CD4-positive, alpha-beta memory T cell (primary cell): ENCODE measurements at regions of chr9 and their contacts with region 1.

Region 1: DNA sequence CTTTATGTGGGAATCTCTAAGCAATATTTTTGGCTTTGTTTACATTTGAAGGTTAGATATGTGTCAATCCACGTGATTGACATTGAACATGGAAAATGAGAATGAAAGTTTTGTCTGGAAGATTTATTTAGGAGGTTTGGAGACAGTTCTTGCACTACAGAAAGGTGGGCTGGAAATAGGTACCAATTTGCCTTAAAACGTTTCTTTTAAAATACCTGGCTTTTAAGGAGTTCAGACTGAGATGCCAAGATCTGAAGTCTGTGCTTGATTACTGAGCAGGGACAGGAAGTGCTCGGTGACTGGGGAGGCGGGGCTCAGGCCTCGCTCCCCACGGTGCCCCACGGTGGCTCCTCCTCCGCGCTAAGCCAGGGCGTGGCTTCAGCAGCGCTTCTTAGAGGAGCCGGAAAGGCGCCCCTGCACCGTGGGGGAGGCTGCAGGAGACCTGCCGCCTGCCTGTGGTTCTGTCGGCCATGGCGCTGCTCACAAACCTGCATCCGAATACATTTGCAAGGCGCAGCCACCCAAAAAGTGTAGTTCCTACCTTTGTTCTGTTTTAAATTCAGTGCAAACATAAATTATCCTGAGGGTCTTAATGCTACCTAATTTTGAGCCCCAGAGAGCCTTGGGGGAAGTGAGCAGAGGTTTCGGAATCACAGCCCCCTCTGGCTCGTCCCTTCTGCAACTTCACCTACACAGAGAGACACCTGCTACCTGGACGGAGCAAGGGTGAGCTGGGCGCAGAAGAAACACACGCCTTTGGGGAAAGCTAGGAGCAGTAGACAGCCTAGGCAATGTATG is 49.2 kb downstream of the USP20 start:
- DNase-seq: peak; percentile 93 to 97 (median 95)
- H3K4me3 ChIP-seq: peak overlapping the region; percentile 78 to 80
- H3K4me3 Mint-ChIP-seq: peak overlapping the region; percentile 90 to 98 (median 94)
- H3K27ac ChIP-seq: peak overlapping the region; percentile 98
- H3K27ac Mint-ChIP-seq: peak overlapping the region; percentile 99 to 100 (median 100)
- H3K4me1 ChIP-seq: peaks cover 62% of the 10 kb centered on the region
- H3K4me1 Mint-ChIP-seq: peaks cover 26 to 60% (median 40%) of the 10 kb centered on the region in 4 donors
- H3K27me3 ChIP-seq: no peaks in the 10 kb centered on the region
- H3K27me3 Mint-ChIP-seq: no peaks in the 10 kb centered on the region

Region 2: GRCh38 chr9:129802851-129803675 is 81.4 kb before region 1 on chr9 and contains the start of gene TOR1B:
- CTCF ChIA-PET with region 1: interaction called, 3 read pairs
- POLR2A ChIA-PET with region 1: interaction called, 8 read pairs
- intact Hi-C with region 1: loop called (anchors 1 kb)
- DNase-seq: peak; percentile 93 to 96 (median 94)
- H3K4me3 ChIP-seq: peak within 1 kb of the TSS; percentile 77 to 78
- H3K4me3 Mint-ChIP-seq: peak within 1 kb of the TSS; percentile 91 to 96 (median 93)
- H3K27ac ChIP-seq: peak within 1 kb of the TSS; percentile 85
- H3K27ac Mint-ChIP-seq: peak within 1 kb of the TSS; percentile 88 to 97 (median 95)
- H3K4me1 ChIP-seq: peaks cover 27% of the 10 kb centered on the region
- H3K4me1 Mint-ChIP-seq: peaks cover 17 to 31% (median 23%) of the 10 kb centered on the region in 4 donors
- H3K27me3 ChIP-seq: no peaks in the 10 kb centered on the region
- H3K27me3 Mint-ChIP-seq: no peaks in the 10 kb centered on the region
- total RNA-seq, gene TOR1B: 29.5 to 33.0 TPM

Region 3: DNA sequence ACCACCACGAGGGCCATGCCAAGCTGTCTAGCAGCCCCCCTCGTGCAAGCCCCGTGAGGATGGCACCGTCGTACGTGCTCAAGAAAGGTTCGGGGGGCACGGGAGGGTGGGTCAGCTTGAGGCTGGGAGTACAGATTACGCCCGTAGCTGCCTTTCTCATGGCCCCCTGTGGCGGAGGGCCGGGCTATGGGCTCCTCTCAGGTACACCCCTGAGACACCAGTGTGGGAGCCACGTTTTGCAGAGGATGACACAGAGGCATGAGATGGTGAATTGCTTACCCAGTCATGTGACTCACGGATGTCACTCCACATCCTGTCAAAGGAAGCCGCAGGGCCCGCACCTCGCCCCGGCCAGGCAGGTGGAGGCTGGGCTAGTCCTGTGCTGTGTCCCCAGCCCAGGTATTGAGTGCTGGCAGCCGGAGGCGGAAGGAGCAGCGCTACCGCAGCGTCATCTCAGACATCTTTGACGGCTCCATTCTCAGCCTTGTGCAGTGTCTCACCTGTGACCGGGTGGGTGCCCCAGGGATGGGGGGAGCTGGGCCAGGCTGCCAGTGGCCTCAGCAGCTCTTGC is 15.4 kb before region 1 on chr9:
- CTCF ChIA-PET with region 1: interaction called, 34 read pairs
- POLR2A ChIA-PET with region 1: interaction called, 423 read pairs
- intact Hi-C with region 1: loop called (anchors 1 kb)
- DNase-seq: peak; percentile 94 to 98 (median 96)
- H3K4me3 ChIP-seq: peak overlapping the region; percentile 12 to 51
- H3K4me3 Mint-ChIP-seq: peak overlapping the region; percentile 59 to 78 (median 69)
- H3K27ac ChIP-seq: peak overlapping the region; percentile 90
- H3K27ac Mint-ChIP-seq: peak overlapping the region; percentile 86 to 98 (median 94)
- H3K4me1 ChIP-seq: peaks cover 89% of the 10 kb centered on the region
- H3K4me1 Mint-ChIP-seq: peaks cover 46 to 93% (median 73%) of the 10 kb centered on the region in 4 donors
- H3K27me3 ChIP-seq: no peaks in the 10 kb centered on the region
- H3K27me3 Mint-ChIP-seq: no peaks in the 10 kb centered on the region

Region 4: GRCh38 chr9:129932303-129933151 is 48.1 kb after region 1 on chr9:
- CTCF ChIA-PET with region 1: interaction called, 3 read pairs
- POLR2A ChIA-PET with region 1: interaction called, 83 read pairs
- intact Hi-C with region 1: loop called (anchors 5 kb)
- DNase-seq: peak in 1 of 5 donors; percentile 15
- H3K4me3 ChIP-seq: peak overlapping the region in 1 of 2 donors; percentile 3
- H3K4me3 Mint-ChIP-seq: peak overlapping the region; percentile 71 to 86 (median 75)
- H3K27ac ChIP-seq: peak overlapping the region; percentile 66
- H3K27ac Mint-ChIP-seq: peak overlapping the region; percentile 89 to 96 (median 91)
- H3K4me1 ChIP-seq: peaks cover 59% of the 10 kb centered on the region
- H3K4me1 Mint-ChIP-seq: peaks cover 38 to 73% (median 56%) of the 10 kb centered on the region in 4 donors
- H3K27me3 ChIP-seq: no peaks in the 10 kb centered on the region
- H3K27me3 Mint-ChIP-seq: no peaks in the 10 kb centered on the region

Region 5: GRCh38 chr9:129962889-129963703 is 78.7 kb after region 1 on chr9:
- CTCF ChIA-PET with region 1: interaction called, 31 read pairs
- POLR2A ChIA-PET with region 1: interaction called, 98 read pairs
- intact Hi-C with region 1: loop called (anchors 1 kb)
- DNase-seq: peak; percentile 85 to 94 (median 88)
- H3K4me3 ChIP-seq: peak overlapping the region; percentile 64 to 67
- H3K4me3 Mint-ChIP-seq: peak overlapping the region; percentile 75 to 92 (median 87)
- H3K27ac ChIP-seq: peak overlapping the region; percentile 90
- H3K27ac Mint-ChIP-seq: peak overlapping the region; percentile 95 to 99 (median 98)
- H3K4me1 ChIP-seq: peaks cover 55% of the 10 kb centered on the region
- H3K4me1 Mint-ChIP-seq: peaks cover 45 to 82% (median 66%) of the 10 kb centered on the region in 4 donors
- H3K27me3 ChIP-seq: no peaks in the 10 kb centered on the region
- H3K27me3 Mint-ChIP-seq: no peaks in the 10 kb centered on the region

Region 6: DNA sequence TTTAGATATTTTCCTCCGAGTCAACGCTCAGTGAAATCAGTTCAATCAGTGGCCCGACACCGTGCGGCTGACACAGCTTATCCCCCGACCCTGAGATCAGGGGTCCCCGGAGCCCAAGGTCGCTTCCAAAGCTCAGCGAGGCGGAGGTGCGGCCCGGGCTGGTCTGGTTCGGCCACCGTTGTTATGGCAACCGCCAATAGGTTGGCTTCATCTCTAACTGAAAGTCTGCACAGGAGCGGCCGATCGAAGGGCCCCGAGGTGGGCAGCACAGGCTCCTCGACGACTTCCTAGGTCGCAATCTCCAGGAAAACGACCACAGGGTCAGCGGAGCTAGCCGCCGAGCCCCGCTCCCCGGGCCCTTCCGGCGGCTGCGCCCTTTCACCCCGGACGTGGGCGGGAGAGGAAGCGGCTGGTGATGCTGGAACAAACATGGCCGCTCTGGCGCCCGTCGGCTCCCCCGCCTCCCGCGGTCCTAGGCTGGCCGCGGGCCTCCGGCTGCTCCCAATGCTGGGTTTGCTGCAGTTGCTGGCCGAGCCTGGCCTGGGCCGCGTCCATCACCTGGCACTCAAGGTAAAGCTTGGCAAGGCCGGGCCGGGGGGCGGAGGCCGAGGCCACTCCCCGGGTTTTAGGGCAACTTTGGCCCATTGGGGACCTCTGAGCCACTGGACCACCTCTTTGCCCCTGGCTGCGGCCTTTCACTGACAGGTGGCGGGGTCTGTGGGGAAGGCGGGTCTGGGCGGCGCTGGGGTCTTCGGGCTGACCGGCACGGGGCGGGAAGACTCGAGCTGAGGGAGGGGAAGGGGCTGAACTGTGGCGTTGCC is 169.3 kb after region 1 on chr9 and contains the start of gene GPR107:
- CTCF ChIA-PET with region 1: interaction called, 6 read pairs
- POLR2A ChIA-PET with region 1: interaction called, 30 read pairs
- intact Hi-C with region 1: loop called (anchors 1 kb)
- DNase-seq: peak; percentile 71 to 80 (median 79)
- H3K4me3 ChIP-seq: peak within 1 kb of the TSS; percentile 67 to 98
- H3K4me3 Mint-ChIP-seq: peak within 1 kb of the TSS; percentile 90 to 95 (median 95)
- H3K27ac ChIP-seq: peak within 1 kb of the TSS; percentile 95
- H3K27ac Mint-ChIP-seq: peak within 1 kb of the TSS; percentile 91 to 97 (median 95)
- H3K4me1 ChIP-seq: peaks cover 29% of the 10 kb centered on the region
- H3K4me1 Mint-ChIP-seq: peaks cover 18 to 38% (median 28%) of the 10 kb centered on the region in 4 donors
- H3K27me3 ChIP-seq: no peaks in the 10 kb centered on the region
- H3K27me3 Mint-ChIP-seq: no peaks in the 10 kb centered on the region
- total RNA-seq, gene GPR107: 23.8 to 24.4 TPM

Region 7: GRCh38 chr9:130663258-130663976 is 779.0 kb after region 1 on chr9:
- CTCF ChIA-PET with region 1: no interaction called
- POLR2A ChIA-PET with region 1: no interaction called
- intact Hi-C with region 1: no loop called
- DNase-seq: no peak
- H3K4me3 ChIP-seq: peak overlapping the region in 1 of 2 donors; percentile 9
- H3K4me3 Mint-ChIP-seq: peak overlapping the region in 7 of 8 donors; percentile 55 to 87 (median 76)
- H3K27ac ChIP-seq: no peak overlapping the region
- H3K27ac Mint-ChIP-seq: peak overlapping the region in 1 of 7 donors; percentile 64
- H3K4me1 ChIP-seq: peaks cover 53% of the 10 kb centered on the region
- H3K4me1 Mint-ChIP-seq: peaks cover 5 to 32% (median 24%) of the 10 kb centered on the region in 4 donors
- H3K27me3 ChIP-seq: peaks cover 29% of the 10 kb centered on the region
- H3K27me3 Mint-ChIP-seq: peaks cover 40 to 48% of the 10 kb centered on the region in 2 donors